GM12878 (cell line): ENCODE measurements at regions of chr2 and their contacts with region 1.

Region 1: DNA sequence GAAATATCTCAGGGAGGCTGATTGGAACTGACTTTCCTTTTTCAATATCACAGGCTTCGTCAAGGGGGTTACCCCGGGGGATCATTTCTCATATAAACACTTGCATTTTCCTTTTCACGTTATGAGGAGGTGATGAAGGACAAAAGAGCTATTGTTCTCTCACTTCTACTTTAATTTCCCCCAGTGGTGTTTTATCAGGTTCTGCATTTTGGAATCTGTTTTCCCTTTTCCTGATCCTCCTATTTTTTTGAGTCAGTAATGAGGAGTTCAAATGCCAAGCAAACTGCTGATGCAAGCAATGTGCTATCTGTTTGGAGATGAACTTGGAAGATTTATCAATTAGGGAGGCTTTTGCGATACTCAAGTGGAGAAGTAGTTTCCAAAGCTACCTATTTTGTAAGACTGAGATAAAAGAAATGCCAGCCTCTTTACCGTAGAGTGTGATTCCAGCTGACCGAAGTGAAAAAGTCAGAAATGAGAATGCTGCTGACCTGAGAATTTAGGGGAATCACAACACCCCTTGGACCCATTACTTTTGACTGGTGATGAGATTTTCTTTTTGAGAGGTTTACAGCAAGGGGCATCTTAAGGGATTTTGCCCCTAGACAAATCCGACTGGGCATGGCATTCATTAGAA is 556.0 kb downstream of the RNF144A start:
- DNase-seq: peak; percentile 39
- ATAC-seq: peak; percentile 84
- H3K4me3 ChIP-seq: no peak overlapping the region
- H3K27ac ChIP-seq: 0 out of 2 replicates have a peak overlapping the region, but pooled peaks have one; percentile 39
- H3K4me1 ChIP-seq: no peaks in the 10 kb centered on the region
- H3K27me3 ChIP-seq: 0 out of 4 replicates have a peak, but pooled peaks cover 0 to 2% of the 10 kb centered on the region in 2 experiments
- CTCF ChIP-seq: no peak
- EP300 ChIP-seq: peak; percentile 30 to 45; a peak in 2 of 4 replicates
- POLR2A ChIP-seq: no peak
- RAD21 ChIP-seq: no peak

Region 2: DNA sequence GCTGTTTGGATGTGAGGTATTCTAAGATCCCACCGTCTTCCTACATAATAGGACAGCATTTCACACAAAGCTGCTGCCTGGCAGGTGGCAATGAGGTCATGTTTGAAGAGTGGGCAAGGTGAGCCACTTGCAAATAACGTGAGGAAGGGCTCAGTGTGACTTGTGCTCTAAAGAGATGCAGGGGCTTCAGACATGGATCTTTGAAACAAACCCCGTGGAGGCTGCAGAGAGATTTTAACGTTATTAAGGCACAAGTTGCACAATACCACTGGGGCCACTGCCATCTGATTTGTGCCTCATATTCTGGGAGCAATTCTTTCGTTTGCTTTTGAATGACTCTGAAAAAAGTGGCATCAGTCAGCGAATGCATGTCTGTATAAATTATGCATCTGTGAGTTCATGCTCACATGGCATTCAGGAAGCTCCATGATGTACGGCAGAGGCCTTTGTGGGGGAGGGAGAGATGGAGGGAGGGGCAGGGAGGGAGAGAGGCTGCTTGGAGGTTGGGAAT is 1419.0 kb before region 1 on chr2:
- CTCF ChIA-PET with region 1: no interaction called
- POLR2A ChIA-PET with region 1: no interaction called
- RAD21 ChIA-PET with region 1: no interaction called
- SMC1A ChIA-PET with region 1: no interaction called
- in situ Hi-C with region 1: no loop called
- intact Hi-C with region 1: no loop called
- DNase-seq: no peak
- ATAC-seq: no peak
- H3K4me3 ChIP-seq: no peak overlapping the region
- H3K27ac ChIP-seq: no peak overlapping the region
- H3K4me1 ChIP-seq: no peaks in the 10 kb centered on the region
- H3K27me3 ChIP-seq: no peaks in the 10 kb centered on the region
- CTCF ChIP-seq: no peak
- EP300 ChIP-seq: no peak
- POLR2A ChIP-seq: no peak
- RAD21 ChIP-seq: no peak

Region 3: GRCh38 chr2:6741239-6741638 is 732.0 kb before region 1 on chr2:
- CTCF ChIA-PET with region 1: no interaction called
- POLR2A ChIA-PET with region 1: no interaction called
- RAD21 ChIA-PET with region 1: no interaction called
- SMC1A ChIA-PET with region 1: no interaction called
- in situ Hi-C with region 1: no loop called
- intact Hi-C with region 1: no loop called
- DNase-seq: no peak
- ATAC-seq: no peak
- H3K4me3 ChIP-seq: no peak overlapping the region
- H3K27ac ChIP-seq: no peak overlapping the region
- H3K4me1 ChIP-seq: no peaks in the 10 kb centered on the region
- H3K27me3 ChIP-seq: 0 out of 4 replicates have a peak, but pooled peaks cover 0 to 3% of the 10 kb centered on the region in 2 experiments
- CTCF ChIP-seq: no peak
- EP300 ChIP-seq: no peak
- POLR2A ChIP-seq: no peak
- RAD21 ChIP-seq: no peak

Region 4: DNA sequence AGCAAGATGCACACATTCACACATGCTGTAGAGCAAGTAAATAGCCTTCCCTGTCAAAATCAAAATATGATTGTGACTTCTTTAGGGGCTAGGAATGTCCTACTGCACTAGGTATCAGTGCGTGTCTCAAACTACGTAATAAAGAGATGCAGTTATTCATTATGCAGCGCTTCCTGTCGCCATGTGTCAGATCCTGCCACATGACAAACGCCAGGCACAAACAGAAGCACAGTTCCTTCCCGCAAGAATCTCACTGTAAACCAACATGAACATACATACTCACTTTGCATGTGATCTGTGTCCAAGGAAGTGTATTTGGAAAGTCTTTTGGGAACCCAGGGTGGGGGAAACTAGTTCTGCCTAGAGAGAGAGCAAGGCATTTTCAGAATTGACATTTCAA is 43.8 kb after region 1 on chr2:
- CTCF ChIA-PET with region 1: no interaction called
- POLR2A ChIA-PET with region 1: no interaction called
- RAD21 ChIA-PET with region 1: interaction called, 5 read pairs
- SMC1A ChIA-PET with region 1: interaction called, 11 read pairs
- in situ Hi-C with region 1: no loop called
- intact Hi-C with region 1: loop called (anchors 2 kb)
- DNase-seq: no peak
- ATAC-seq: peak; percentile 68
- H3K4me3 ChIP-seq: no peak overlapping the region
- H3K27ac ChIP-seq: no peak overlapping the region
- H3K4me1 ChIP-seq: peaks cover 17% of the 10 kb centered on the region
- H3K27me3 ChIP-seq: peaks cover 0 to 2% of the 10 kb centered on the region in 2 experiments; a peak in 1 of 4 replicates
- CTCF ChIP-seq: no peak
- EP300 ChIP-seq: no peak; a peak in 2 of 4 replicates
- POLR2A ChIP-seq: no peak
- RAD21 ChIP-seq: no peak

Region 5: DNA sequence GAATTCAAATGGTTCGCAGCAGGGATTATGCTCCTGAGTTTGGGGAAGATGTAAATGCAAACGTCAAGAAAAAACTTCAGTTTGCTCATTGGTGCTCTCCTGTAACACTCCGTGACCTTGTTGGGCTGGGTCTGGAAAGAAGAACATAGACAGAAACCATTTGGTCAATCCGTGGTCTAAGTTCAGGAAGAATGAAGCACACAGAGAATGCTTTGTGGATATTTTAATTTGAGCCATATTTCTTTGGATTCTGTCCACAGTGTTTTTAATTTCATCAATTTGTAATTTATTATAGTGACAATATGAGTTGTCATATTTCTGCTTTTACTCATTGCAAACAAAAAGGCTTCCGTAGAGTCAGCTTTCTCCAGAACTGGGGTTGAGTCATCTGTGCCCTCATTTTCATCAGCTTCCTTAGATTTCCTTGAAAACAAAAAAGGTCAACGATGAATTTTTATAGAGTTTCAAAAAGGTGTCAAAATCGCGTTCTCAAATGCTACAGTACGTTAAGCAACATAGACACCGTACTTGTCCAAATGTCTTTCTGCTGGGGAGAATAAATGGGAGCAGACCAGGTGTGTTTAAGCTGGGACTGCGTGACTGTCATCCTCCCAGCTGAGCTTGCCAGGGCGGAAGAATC is 50.3 kb after region 1 on chr2:
- CTCF ChIA-PET with region 1: no interaction called
- POLR2A ChIA-PET with region 1: no interaction called
- RAD21 ChIA-PET with region 1: no interaction called
- SMC1A ChIA-PET with region 1: interaction called, 11 read pairs
- in situ Hi-C with region 1: no loop called
- intact Hi-C with region 1: no loop called
- DNase-seq: no peak
- ATAC-seq: no peak
- H3K4me3 ChIP-seq: no peak overlapping the region
- H3K27ac ChIP-seq: no peak overlapping the region
- H3K4me1 ChIP-seq: no peaks in the 10 kb centered on the region
- H3K27me3 ChIP-seq: peaks cover 0 to 2% of the 10 kb centered on the region in 2 experiments; a peak in 1 of 4 replicates
- CTCF ChIP-seq: no peak
- EP300 ChIP-seq: no peak
- POLR2A ChIP-seq: no peak
- RAD21 ChIP-seq: no peak